Heart right ventricle (tissue), 16 donors: ENCODE measurements at regions of chr18 and their contacts with region 1.

Region 1: DNA sequence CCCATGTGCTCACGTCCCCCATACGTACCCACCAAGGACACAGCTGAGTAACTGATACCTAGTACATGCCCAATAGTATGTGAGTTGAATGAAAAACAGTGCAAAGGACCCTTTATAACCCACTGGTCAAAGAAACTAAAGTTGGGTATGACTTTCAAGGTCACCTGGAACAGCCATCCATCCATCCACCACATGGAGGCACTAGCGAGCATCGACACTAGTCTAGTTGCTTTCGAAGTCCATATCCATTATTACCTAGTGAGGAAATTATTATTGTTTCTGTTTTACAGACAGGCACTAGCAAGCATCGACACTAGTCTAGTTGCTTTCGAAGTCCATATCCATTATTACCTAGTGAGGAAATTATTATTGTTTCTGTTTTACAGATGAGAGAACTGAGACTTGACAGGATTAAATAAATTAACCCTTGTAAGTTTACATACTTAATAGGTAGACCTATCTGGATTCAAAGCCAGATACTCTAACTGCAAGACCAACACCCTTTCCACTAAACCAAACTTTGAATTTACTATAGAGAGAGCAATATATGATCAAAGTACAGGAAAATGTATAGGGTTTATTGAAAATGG is 233.7 kb downstream of the METTL4 start:
- DNase-seq: peak; percentile 10 to 11
- ATAC-seq: no peak
- H3K4me3 ChIP-seq: no peak overlapping the region
- H3K27ac ChIP-seq: no peak overlapping the region
- H3K4me1 ChIP-seq: no peaks in the 10 kb centered on the region
- H3K27me3 ChIP-seq: peaks cover 0 to 10% (median 0%) of the 10 kb centered on the region in 7 donors
- CTCF ChIP-seq: peak in 8 of 9 donors; percentile 10 to 69 (median 48)

Region 2: DNA sequence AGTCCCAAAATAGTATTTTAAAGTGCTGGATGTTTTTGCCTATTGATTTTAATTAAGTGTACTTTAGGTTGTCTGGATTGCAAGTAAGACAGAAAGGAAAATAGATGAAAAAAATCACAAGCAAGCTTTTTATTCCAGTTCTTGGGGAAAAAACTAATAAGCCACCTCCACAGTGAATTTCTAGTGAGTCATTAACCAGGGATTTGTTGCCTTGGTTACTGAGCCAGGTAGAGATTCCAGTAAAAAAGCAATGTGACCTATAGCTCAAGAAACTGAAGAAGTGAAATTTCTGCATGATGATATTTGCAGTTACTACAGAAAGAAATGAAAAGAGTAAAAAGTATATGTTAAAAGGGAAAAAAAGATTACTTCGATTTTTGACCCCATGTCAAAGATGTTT is 73.0 kb after region 1 on chr18:
- intact Hi-C with region 1: loop called in 1 of 10 experiments (anchors 10 kb)
- DNase-seq: no peak
- ATAC-seq: no peak
- H3K4me3 ChIP-seq: no peak overlapping the region
- H3K27ac ChIP-seq: no peak overlapping the region
- H3K4me1 ChIP-seq: no peaks in the 10 kb centered on the region
- H3K27me3 ChIP-seq: peaks cover 0 to 5% (median 0%) of the 10 kb centered on the region in 7 donors
- CTCF ChIP-seq: no peak

Region 3: GRCh38 chr18:2536493-2536892 is 198.8 kb after region 1 on chr18:
- intact Hi-C with region 1: loop called in 6 of 10 experiments (anchors 2 to 10 kb)
- DNase-seq: no peak
- ATAC-seq: peak in 5 of 8 donors; percentile 30 to 85 (median 56)
- H3K4me3 ChIP-seq: no peak overlapping the region
- H3K27ac ChIP-seq: peak overlapping the region in 2 of 10 donors; percentile 7 to 22
- H3K4me1 ChIP-seq: no peaks in the 10 kb centered on the region
- H3K27me3 ChIP-seq: no peaks in the 10 kb centered on the region
- CTCF ChIP-seq: no peak

Region 4: GRCh38 chr18:2547477-2548087 is 209.9 kb after region 1 on chr18:
- intact Hi-C with region 1: loop called in 6 of 10 experiments (anchors 5 to 10 kb)
- DNase-seq: no peak
- ATAC-seq: peak in 2 of 8 donors; percentile 42 to 55
- H3K4me3 ChIP-seq: no peak overlapping the region
- H3K27ac ChIP-seq: no peak overlapping the region
- H3K4me1 ChIP-seq: no peaks in the 10 kb centered on the region
- H3K27me3 ChIP-seq: no peaks in the 10 kb centered on the region
- CTCF ChIP-seq: peak; percentile 36 to 72 (median 61)